ENCODE measurements at regions of chr10 and their contacts with region 1.

Region 1: GRCh38 chr10:60237977-60238758 is 151.5 kb downstream of the ANK3 start:
- DNase-seq: peak; percentile 68
- H3K4me3 Mint-ChIP-seq: peak overlapping the region; percentile 73
- H3K27ac Mint-ChIP-seq: peak overlapping the region; percentile 67
- H3K4me1 Mint-ChIP-seq: peaks cover 24% of the 10 kb centered on the region
- H3K27me3 Mint-ChIP-seq: no peaks in the 10 kb centered on the region

Region 2: DNA sequence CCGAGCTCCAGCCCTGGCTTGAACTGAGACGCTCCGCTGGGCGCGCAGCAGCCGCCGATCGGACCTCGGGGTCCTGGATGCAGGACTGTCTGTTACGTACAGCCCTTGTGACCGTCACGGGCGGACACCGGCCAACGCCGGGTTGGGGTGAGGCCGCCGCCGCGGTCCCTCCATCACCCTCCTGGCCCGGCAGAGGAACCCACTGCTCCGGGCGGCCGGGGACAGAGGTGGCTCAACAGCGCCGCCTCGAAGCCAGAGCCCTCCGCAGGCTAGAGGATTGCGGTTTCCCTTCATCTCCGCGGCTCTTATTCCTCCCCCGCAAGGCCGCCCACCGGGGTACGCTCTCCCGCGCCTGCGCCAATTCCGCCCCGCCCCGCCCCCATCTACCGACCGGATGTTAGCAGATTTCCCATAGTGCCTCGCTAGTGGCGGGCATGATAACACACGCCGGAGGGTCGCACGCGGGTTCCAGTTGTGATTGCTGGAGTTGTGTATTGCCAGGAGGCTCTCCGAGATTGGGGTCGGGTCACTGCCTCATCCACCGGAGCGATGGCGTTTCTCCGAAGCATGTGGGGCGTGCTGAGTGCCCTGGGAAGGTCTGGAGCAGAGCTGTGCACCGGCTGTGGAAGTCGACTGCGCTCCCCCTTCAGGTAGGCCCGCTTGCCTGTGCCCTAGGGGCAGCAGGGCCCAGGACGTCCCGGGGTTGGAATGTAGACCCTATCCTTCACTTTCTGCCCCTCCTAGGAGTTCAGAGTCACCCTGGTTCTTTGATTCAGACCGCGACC is 1853.0 kb before region 1 on chr10 and contains the start of gene TFAM:
- intact Hi-C with region 1: loop called (anchors 10 kb)
- DNase-seq: peak; percentile 98
- H3K4me3 Mint-ChIP-seq: peak within 1 kb of the TSS; percentile 92
- H3K27ac Mint-ChIP-seq: peak within 1 kb of the TSS; percentile 96
- H3K4me1 Mint-ChIP-seq: peaks cover 27% of the 10 kb centered on the region
- H3K27me3 Mint-ChIP-seq: peaks cover 2% of the 10 kb centered on the region
- total RNA-seq, gene TFAM: 102 and 108 TPM in 2 replicates

Region 3: GRCh38 chr10:60434418-60435046 is 196.4 kb after region 1 on chr10:
- intact Hi-C with region 1: loop called (anchors 10 kb)
- DNase-seq: no peak
- H3K4me3 Mint-ChIP-seq: no peak overlapping the region
- H3K27ac Mint-ChIP-seq: no peak overlapping the region
- H3K4me1 Mint-ChIP-seq: peaks cover 2% of the 10 kb centered on the region
- H3K27me3 Mint-ChIP-seq: no peaks in the 10 kb centered on the region

Region 4: DNA sequence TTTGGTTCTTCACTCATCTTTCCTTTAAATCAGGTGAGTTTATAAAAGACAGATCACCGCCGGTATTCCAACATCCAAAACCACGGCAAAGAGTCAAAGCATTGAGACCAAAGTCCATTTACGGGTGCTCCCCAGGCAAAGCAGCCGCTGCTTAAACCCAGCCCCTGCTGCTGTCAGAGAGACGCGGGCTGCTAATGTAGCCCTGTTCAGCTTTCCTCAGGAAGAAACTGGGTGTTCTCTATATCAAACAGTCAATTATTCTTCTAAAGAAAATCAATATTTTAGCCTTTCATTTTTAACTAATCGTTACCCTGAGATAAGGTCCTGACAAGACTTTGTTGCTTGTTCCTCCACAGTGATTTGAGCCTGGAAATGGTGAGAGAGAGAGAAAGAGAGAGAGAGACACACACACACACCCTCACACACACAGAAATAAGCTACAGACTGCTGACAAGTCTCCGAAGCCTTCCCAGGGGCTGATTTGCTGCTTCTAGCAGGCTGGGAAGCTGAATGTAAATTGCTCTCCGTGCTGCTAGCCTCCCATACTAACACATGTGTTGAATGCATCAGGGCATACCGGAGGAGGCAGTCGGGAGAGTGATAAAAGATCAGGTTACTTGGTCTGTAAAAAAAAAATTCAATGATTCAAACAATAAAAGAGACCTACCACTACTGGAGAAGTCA is 334.5 kb after region 1 on chr10:
- intact Hi-C with region 1: loop called (anchors 2 kb)
- DNase-seq: peak; percentile 76
- H3K4me3 Mint-ChIP-seq: peak overlapping the region; percentile 94
- H3K27ac Mint-ChIP-seq: peak overlapping the region; percentile 90
- H3K4me1 Mint-ChIP-seq: peaks cover 48% of the 10 kb centered on the region
- H3K27me3 Mint-ChIP-seq: no peaks in the 10 kb centered on the region

Region 5: GRCh38 chr10:60778214-60779029 is 540.3 kb after region 1 on chr10 and contains the start of gene CDK1:
- intact Hi-C with region 1: loop called (anchors 2 kb)
- DNase-seq: peak; percentile 99
- H3K4me3 Mint-ChIP-seq: peak within 1 kb of the TSS; percentile 99
- H3K27ac Mint-ChIP-seq: peak within 1 kb of the TSS; percentile 99
- H3K4me1 Mint-ChIP-seq: peaks cover 32% of the 10 kb centered on the region
- H3K27me3 Mint-ChIP-seq: peaks cover 2% of the 10 kb centered on the region
- total RNA-seq, gene CDK1: 101 and 105 TPM in 2 replicates

Region 6: DNA sequence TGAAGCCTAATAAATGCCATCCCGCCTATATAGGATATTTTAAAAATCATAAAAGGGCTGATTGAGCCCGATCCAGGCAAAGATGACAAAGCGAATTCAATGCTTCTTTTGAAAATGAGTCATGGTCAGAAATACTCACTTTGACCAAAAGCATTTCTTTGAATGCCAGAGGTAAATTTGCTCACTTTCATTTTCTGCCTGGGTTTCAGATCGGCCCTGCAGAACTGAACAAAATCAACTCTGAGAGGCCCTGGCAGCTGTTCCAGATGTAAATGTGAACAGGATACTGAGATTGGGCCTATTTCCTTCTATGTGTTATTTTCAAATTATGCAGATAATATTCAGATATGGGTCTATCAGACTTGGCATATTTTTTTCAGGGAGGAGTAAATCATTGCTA is 1548.6 kb after region 1 on chr10:
- intact Hi-C with region 1: loop called (anchors 5 kb)
- DNase-seq: peak; percentile 69
- H3K4me3 Mint-ChIP-seq: no peak overlapping the region
- H3K27ac Mint-ChIP-seq: no peak overlapping the region
- H3K4me1 Mint-ChIP-seq: peaks cover 49% of the 10 kb centered on the region
- H3K27me3 Mint-ChIP-seq: no peaks in the 10 kb centered on the region

Measured in activated CD4-positive, alpha-beta T cell treated with anti-CD3 and anti-CD28 coated beads, Interleukin-2, amount 10 ng/mL, durations not matched to agents 24 days and 14 days (primary cell).